Posterior vena cava (tissue), 2 donors: ENCODE measurements at regions of chr10 and their contacts with region 1.

Region 1: DNA sequence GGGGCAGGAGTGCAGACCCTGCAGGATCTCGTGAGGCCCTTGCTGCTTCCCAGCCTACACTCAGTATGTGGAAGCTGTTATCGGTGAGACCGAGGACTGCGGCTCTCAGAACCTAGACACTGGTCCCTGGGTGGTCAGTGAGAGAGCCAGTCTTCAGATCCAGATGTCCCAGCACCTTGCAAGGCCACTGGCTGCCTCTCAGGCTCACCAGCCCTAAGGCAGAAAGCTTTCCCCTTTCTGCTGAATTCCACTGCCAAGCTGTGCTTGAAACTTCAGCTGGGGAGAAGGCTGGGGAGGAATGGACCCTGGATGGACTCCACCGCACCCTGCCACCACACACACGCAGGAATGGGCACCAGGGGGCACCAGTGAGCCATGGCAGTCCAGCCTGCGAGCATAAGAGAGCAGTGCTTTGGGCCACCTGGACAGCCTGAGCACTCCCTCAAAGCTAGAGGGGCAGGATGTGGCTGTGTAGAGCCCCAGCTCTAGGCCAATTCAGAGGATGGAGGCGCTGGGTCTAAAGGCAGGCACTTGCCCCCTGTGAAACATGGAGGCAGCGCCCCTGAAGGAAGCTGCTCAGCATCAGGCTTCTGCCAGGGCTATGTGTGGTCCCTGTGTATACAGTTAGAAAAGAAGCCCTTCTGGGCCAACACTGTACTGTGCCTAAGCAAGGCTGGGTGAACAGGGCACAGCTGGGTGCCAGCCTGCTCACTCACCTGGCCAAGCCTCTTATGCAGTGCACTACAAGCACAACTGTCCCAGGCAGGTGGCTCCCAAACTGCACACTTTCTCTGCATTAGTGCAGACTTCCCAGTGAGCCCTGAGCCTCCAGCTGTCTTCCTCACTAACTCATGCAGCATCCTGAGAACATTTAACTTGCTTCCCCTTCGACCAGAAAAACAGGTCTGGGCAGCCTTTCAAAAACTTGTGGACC is 21.6 kb downstream of the TMEM72 start:
- DNase-seq: peak; percentile 96

Region 2: GRCh38 chr10:44267007-44267406 is 665.8 kb before region 1 on chr10:
- intact Hi-C with region 1: no loop called
- DNase-seq: no peak

Region 3: GRCh38 chr10:44974628-44975431 is 42.0 kb after region 1 on chr10:
- intact Hi-C with region 1: loop called (anchors 1 to 5 kb)
- DNase-seq: peak; percentile 91